ENCODE measurements at regions of chr1 and their contacts with region 1.

Region 1: DNA sequence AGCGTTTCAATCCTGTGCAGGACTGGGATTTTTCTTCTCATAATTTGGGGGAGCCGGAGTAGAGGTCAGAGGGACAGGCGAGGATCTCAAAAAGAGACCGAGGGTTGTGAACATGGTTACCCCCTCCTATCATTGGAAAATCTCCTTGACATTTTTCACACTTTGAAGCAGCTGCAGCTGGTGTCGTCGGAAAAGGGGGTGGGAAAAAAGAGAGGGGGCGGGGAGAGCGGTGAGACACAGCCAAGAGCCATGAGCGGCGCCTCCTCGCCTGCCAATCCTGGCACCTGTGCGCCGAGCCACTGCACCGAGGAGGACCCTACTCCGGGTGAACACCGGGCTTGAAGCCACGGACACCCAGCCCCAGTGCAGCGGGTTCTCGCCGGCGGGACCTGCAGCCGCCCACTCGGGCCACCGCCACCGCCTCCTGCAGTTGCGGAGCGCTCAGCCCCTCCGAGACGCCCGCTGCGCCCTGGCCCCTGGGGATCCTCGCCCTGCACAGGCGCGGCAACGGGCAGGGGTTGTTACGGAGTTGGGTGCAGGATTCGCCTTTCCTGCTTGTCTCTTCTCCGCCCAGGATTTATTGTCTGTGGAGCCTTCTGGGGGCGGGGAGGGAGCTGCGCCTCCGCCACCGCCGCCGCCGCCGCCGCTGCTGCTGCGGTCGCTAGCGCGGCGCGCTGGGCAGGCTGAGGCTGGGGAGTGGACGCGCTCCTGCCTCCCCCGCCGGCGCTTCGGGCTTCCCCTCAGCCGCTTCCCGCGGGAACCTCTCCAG is at the start of gene LRRC7:
- DNase-seq: peak; percentile 28
- H3K4me3 ChIP-seq: peak within 1 kb of the TSS; percentile 37 to 64
- H3K27ac ChIP-seq: no peak within 1 kb of the TSS
- H3K4me1 ChIP-seq: no peaks in the 10 kb centered on the region
- H3K27me3 ChIP-seq: no peaks in the 10 kb centered on the region
- CTCF ChIP-seq: no peak
- POLR2A ChIP-seq: no peak
- total RNA-seq, gene LRRC7: 5.2 to 6.9 TPM

Region 2: GRCh38 chr1:69459244-69459643 is 108.6 kb before region 1 on chr1:
- intact Hi-C with region 1: no loop called
- DNase-seq: no peak
- H3K4me3 ChIP-seq: no peak overlapping the region
- H3K27ac ChIP-seq: no peak overlapping the region
- H3K4me1 ChIP-seq: no peaks in the 10 kb centered on the region
- H3K27me3 ChIP-seq: no peaks in the 10 kb centered on the region
- CTCF ChIP-seq: no peak
- POLR2A ChIP-seq: no peak

Region 3: GRCh38 chr1:69528376-69528775 is 39.5 kb before region 1 on chr1:
- intact Hi-C with region 1: loop called (anchors 2 kb)
- DNase-seq: no peak
- H3K4me3 ChIP-seq: no peak overlapping the region
- H3K27ac ChIP-seq: no peak overlapping the region
- H3K4me1 ChIP-seq: no peaks in the 10 kb centered on the region
- H3K27me3 ChIP-seq: no peaks in the 10 kb centered on the region
- CTCF ChIP-seq: no peak
- POLR2A ChIP-seq: no peak

Measured in testis (tissue), 5 donors.